ENCODE measurements at regions of chr19 and their contacts with region 1.

Region 1: GRCh38 chr19:14147797-14148605 is 11.6 kb upstream of the ASF1B start:
- DNase-seq: peak; percentile 74 to 79
- ATAC-seq: peak; percentile 84 to 91 (median 86)
- H3K4me3 ChIP-seq: peak overlapping the region in 2 of 10 donors; percentile 24 to 33
- H3K27ac ChIP-seq: peak overlapping the region; percentile 25 to 90 (median 86)
- H3K4me1 ChIP-seq: peaks cover 2 to 47% (median 32%) of the 10 kb centered on the region in 9 donors
- H3K27me3 ChIP-seq: no peaks in the 10 kb centered on the region
- CTCF ChIP-seq: peak; percentile 77 to 95 (median 89)

Region 2: GRCh38 chr19:13774217-13775191 is 373.5 kb before region 1 on chr19 and contains the start of gene C19orf53:
- intact Hi-C with region 1: no loop called
- DNase-seq: peak; percentile 88 to 93
- ATAC-seq: peak; percentile 95 to 99 (median 98)
- H3K4me3 ChIP-seq: peak within 1 kb of the TSS; percentile 74 to 98 (median 89)
- H3K27ac ChIP-seq: peak within 1 kb of the TSS; percentile 62 to 94 (median 86)
- H3K4me1 ChIP-seq: peaks cover 0 to 23% (median 19%) of the 10 kb centered on the region in 9 donors
- H3K27me3 ChIP-seq: no peaks in the 10 kb centered on the region
- CTCF ChIP-seq: no peak
- total RNA-seq, gene C19orf53: 80.5 to 101 (median 90.3) TPM

Region 3: GRCh38 chr19:14081325-14082093 is 66.5 kb before region 1 on chr19:
- intact Hi-C with region 1: no loop called
- DNase-seq: peak; percentile 99 to 100
- ATAC-seq: peak; percentile 89 to 97 (median 96)
- H3K4me3 ChIP-seq: peak overlapping the region; percentile 63 to 93 (median 82)
- H3K27ac ChIP-seq: peak overlapping the region; percentile 88 to 97 (median 94)
- H3K4me1 ChIP-seq: peaks cover 5 to 42% (median 19%) of the 10 kb centered on the region in 9 donors
- H3K27me3 ChIP-seq: no peaks in the 10 kb centered on the region
- CTCF ChIP-seq: no peak

Region 4: GRCh38 chr19:14198384-14199376 is 50.7 kb after region 1 on chr19:
- intact Hi-C with region 1: loop called in 3 of 10 experiments (anchors 2 to 10 kb)
- DNase-seq: no peak
- ATAC-seq: no peak
- H3K4me3 ChIP-seq: no peak overlapping the region
- H3K27ac ChIP-seq: no peak overlapping the region
- H3K4me1 ChIP-seq: peaks cover 0 to 14% (median 0%) of the 10 kb centered on the region in 9 donors
- H3K27me3 ChIP-seq: no peaks in the 10 kb centered on the region
- CTCF ChIP-seq: no peak

Region 5: GRCh38 chr19:14347999-14348889 is 200.2 kb after region 1 on chr19:
- intact Hi-C with region 1: loop called (anchors 1 to 10 kb)
- DNase-seq: peak; percentile 61 to 75
- ATAC-seq: peak; percentile 72 to 90 (median 84)
- H3K4me3 ChIP-seq: peak overlapping the region in 8 of 10 donors; percentile 14 to 37 (median 28)
- H3K27ac ChIP-seq: no peak overlapping the region
- H3K4me1 ChIP-seq: peaks cover 0 to 12% (median 0%) of the 10 kb centered on the region in 9 donors
- H3K27me3 ChIP-seq: peaks cover 0 to 4% (median 0%) of the 10 kb centered on the region in 7 donors
- CTCF ChIP-seq: peak; percentile 93 to 99 (median 96)

Region 6: DNA sequence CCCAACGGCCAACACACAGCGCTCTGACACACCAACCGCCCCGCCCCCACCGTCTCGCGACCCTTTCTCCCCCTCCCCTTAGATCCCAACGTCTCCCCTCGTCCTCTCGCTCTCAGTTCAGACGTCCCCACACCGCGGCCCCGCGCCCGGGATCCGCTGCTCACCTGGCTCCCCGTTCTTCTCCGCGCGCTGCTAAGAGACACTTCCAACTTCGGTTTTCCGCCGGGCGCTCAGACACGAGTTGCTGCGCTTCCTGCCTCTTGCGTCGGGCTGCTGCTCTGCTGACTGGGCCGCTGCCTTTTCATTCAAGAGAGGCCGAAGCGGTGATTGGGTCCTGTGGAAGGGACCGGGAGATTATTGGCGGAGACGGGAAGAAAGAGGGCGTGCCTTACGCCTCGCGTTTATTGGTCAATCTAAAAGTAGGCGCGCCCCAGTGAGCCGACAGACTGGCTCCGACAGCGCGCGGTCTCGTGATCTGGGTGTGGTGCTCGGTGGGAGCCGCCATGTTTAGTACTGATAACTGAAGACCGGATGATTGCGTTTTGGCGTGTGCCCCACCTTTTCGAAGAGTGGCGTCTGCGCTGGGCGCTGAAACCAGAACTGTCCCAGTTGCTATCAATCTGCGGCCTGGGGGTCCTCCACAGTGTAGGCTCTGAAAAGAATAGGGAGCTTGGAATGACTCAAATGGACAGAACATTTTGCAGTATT is 271.3 kb after region 1 on chr19 and contains the start of gene DDX39A:
- intact Hi-C with region 1: loop called in 2 of 10 experiments (anchors 10 kb)
- DNase-seq: peak; percentile 95 to 99
- ATAC-seq: peak; percentile 97 to 99 (median 98)
- H3K4me3 ChIP-seq: peak within 1 kb of the TSS; percentile 72 to 97 (median 92)
- H3K27ac ChIP-seq: peak within 1 kb of the TSS; percentile 64 to 93 (median 90)
- H3K4me1 ChIP-seq: peaks cover 5 to 61% (median 30%) of the 10 kb centered on the region in 9 donors
- H3K27me3 ChIP-seq: no peaks in the 10 kb centered on the region
- CTCF ChIP-seq: no peak
- total RNA-seq, gene DDX39A: 15.4 to 39.6 (median 21.7) TPM